Sigmoid colon (tissue), 7 donors: ENCODE measurements at regions of chr20 and their contacts with region 1.

Region 1: DNA sequence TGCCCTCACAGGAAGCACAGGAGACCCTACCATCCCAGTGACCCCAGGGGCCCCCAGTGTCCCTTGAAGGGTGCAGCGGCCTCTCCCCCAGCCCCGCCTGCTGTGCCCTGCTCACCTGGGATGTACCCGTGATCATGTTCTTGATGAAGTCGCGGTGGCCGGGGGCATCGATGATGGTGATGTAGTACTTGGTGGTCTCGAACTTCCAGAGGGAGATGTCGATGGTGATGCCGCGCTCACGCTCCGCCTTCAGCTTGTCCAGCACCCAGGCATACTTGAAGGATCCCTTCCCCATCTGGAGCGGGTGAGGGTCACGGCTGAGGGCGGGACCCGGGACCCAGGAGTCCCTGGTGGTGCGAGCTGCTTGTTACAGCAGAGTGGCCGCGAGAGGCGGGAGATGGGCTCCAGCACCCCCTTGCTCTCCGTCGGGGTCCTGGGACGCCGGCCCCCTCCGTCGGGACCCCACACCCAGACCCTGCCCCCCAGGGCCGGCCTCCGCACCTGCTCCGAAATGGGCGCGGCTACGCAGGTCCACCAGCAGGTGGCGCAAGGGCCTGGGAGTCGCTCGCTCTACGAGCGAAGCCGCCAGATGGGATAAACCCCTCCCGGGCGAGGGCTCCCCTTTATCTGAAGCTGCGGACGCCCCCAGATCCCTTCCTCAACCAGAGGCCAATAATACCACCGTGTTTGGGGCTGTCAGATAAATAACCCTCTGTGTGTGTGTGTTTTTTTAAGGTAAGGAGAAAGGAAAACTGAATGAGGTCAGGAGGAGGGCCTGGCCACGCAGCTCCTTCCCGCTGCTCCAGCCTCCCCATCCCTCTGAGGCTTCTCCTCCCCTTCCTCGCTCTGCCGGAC is 2.9 kb downstream of the EEF1A2 start:
- DNase-seq: peak; percentile 81
- H3K4me3 ChIP-seq: peak overlapping the region in 3 of 4 donors; percentile 34 to 40 (median 38)
- H3K27ac ChIP-seq: no peak overlapping the region
- H3K4me1 ChIP-seq: peaks cover 0 to 31% (median 26%) of the 10 kb centered on the region in 4 donors
- H3K27me3 ChIP-seq: peaks cover 31 to 63% (median 47%) of the 10 kb centered on the region in 3 donors
- CTCF ChIP-seq: peak; percentile 58 to 96 (median 81)
- EP300 ChIP-seq: no peak
- POLR2A ChIP-seq: no peak

Region 2: DNA sequence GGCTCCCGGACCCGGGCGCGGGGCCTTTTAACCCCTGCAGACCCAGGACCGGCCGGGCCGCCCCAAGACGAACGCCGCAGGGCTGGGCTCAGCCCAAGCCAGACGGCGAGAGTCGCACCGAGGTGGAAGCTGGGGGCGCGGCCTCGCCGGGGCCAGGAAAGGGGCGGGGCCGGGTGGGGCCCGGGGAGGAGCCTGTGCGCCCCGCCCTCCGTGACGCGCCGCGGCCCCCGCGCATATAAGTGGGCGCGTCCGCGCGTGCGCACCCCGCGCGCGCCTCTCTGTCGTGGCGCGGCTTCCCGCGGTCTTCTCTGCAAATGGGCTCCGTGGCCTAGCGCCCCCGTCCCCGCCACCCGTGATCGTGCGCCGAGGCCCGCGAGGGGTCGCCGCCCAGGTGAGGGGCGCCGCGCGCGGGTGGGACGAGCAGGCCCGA is 24.6 kb after region 1 on chr20 and contains the start of gene PPDPF:
- intact Hi-C with region 1: loop called (anchors 1 kb)
- DNase-seq: peak; percentile 91
- H3K4me3 ChIP-seq: peak within 1 kb of the TSS; percentile 69 to 97 (median 94)
- H3K27ac ChIP-seq: peak within 1 kb of the TSS; percentile 89 to 98 (median 94)
- H3K4me1 ChIP-seq: peaks cover 0 to 36% (median 28%) of the 10 kb centered on the region in 4 donors
- H3K27me3 ChIP-seq: no peaks in the 10 kb centered on the region
- CTCF ChIP-seq: no peak
- EP300 ChIP-seq: no peak
- POLR2A ChIP-seq: peak in 1 of 2 donors; percentile 58
- total RNA-seq, gene PPDPF: 82.8 to 244 (median 146) TPM